ENCODE measurements at regions of chrX and their contacts with region 1.

Region 1: GRCh38 chrX:2819345-2820135 is 9.2 kb upstream of the GYG2 start:
- DNase-seq: no peak
- ATAC-seq: no peak
- H3K4me3 ChIP-seq: no peak overlapping the region
- H3K27ac ChIP-seq: no peak overlapping the region
- H3K4me1 ChIP-seq: no peaks in the 10 kb centered on the region
- H3K27me3 ChIP-seq: peaks cover 0 to 7% (median 0%) of the 10 kb centered on the region in 3 donors
- CTCF ChIP-seq: peak in 1 of 5 experiments; percentile 31
- POLR2A ChIP-seq: no peak

Region 2: DNA sequence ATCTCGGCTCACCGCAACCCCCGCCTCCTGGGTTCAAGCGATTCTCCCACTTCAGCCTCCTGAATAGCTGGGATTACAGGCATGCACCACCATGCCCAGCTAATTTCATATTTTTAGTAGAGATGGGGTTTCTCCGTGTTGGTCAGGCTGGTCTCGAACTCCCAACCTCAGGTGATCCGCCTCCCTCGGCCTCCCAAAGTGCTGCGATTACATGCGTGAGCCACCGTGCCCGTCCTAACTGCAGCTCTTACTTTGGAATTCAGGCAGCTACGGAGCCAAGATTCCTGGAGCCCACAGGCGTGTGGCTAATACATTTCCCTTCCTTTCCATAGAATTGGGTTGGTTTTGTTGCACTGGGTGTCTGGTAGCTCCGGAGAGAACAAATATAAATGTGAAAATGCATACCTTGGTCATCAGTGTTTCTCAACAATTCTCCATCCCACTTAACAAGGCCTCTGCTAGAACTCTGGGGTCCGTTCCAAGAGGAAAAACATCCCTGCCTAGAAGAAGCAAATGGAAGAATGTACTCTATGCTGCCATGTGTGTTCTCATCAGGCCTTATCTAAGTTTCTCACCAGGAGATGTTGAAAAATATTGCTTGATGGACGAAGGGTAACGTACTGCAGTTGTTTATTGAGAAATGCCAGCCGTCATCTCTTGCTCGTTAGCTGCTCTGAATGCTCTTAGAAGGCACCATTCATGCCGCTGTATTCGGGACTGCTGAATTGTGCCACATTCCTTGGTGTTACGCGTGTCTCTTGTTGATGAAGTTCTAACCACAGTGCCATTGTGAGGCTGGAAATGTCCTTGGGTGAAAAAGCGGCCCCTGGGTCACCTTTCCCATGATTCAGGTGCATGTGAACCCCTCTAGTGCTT is 179.0 kb before region 1 on chrX:
- in situ Hi-C with region 1: loop called in 2 of 4 experiments (anchors 5 to 10 kb)
- intact Hi-C with region 1: no loop called
- DNase-seq: no peak
- ATAC-seq: no peak
- H3K4me3 ChIP-seq: no peak overlapping the region
- H3K27ac ChIP-seq: no peak overlapping the region
- H3K4me1 ChIP-seq: no peaks in the 10 kb centered on the region
- H3K27me3 ChIP-seq: no peaks in the 10 kb centered on the region
- CTCF ChIP-seq: no peak
- POLR2A ChIP-seq: no peak

Region 3: DNA sequence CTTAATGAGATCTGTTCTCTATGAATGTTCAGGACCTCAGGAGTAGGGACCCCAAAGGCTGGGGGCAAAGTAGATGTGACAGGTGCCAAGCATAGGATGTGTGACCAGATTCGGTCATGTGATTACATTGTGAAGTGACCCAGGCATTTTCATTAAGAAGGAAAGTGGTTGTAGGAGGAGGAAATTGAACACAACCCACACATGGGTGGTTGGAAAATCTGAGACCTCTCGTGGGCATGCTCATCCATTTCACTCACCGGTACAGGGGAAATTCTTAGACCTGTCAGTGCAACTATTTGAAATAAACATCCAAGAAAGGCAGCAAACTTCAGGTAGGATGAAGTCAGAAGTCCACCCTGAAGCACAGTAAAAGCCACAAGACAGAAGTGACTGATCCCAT is 171.9 kb before region 1 on chrX:
- in situ Hi-C with region 1: loop called in 3 of 4 experiments (anchors 5 to 25 kb)
- intact Hi-C with region 1: no loop called
- DNase-seq: no peak
- ATAC-seq: no peak
- H3K4me3 ChIP-seq: no peak overlapping the region
- H3K27ac ChIP-seq: no peak overlapping the region
- H3K4me1 ChIP-seq: no peaks in the 10 kb centered on the region
- H3K27me3 ChIP-seq: no peaks in the 10 kb centered on the region
- CTCF ChIP-seq: no peak
- POLR2A ChIP-seq: no peak

Region 4: GRCh38 chrX:2664502-2664901 is 155.0 kb before region 1 on chrX:
- in situ Hi-C with region 1: loop called in 1 of 4 experiments (anchors 25 kb)
- intact Hi-C with region 1: no loop called
- DNase-seq: peak in 1 of 2 donors; percentile 25
- ATAC-seq: peak in 1 of 2 donors; percentile 51
- H3K4me3 ChIP-seq: no peak overlapping the region
- H3K27ac ChIP-seq: peak overlapping the region in 3 of 4 donors; percentile 18 to 41 (median 18)
- H3K4me1 ChIP-seq: no peaks in the 10 kb centered on the region
- H3K27me3 ChIP-seq: no peaks in the 10 kb centered on the region
- CTCF ChIP-seq: no peak
- POLR2A ChIP-seq: no peak

Region 5: GRCh38 chrX:3184176-3184930 is 364.8 kb after region 1 on chrX:
- in situ Hi-C with region 1: no loop called
- intact Hi-C with region 1: no loop called
- DNase-seq: peak; percentile 2 to 12
- ATAC-seq: peak in 1 of 2 donors; percentile 52
- H3K4me3 ChIP-seq: no peak overlapping the region
- H3K27ac ChIP-seq: peak overlapping the region in 1 of 4 donors; percentile 15
- H3K4me1 ChIP-seq: no peaks in the 10 kb centered on the region
- H3K27me3 ChIP-seq: no peaks in the 10 kb centered on the region
- CTCF ChIP-seq: no peak
- POLR2A ChIP-seq: no peak